Left colon (tissue), 2 donors: ENCODE measurements at regions of chr13 and their contacts with region 1.

Region 1: GRCh38 chr13:29707876-29708543 is 112.5 kb upstream of the SLC7A1 start:
- DNase-seq: peak; percentile 30 to 36
- ATAC-seq: peak; percentile 91

Region 2: DNA sequence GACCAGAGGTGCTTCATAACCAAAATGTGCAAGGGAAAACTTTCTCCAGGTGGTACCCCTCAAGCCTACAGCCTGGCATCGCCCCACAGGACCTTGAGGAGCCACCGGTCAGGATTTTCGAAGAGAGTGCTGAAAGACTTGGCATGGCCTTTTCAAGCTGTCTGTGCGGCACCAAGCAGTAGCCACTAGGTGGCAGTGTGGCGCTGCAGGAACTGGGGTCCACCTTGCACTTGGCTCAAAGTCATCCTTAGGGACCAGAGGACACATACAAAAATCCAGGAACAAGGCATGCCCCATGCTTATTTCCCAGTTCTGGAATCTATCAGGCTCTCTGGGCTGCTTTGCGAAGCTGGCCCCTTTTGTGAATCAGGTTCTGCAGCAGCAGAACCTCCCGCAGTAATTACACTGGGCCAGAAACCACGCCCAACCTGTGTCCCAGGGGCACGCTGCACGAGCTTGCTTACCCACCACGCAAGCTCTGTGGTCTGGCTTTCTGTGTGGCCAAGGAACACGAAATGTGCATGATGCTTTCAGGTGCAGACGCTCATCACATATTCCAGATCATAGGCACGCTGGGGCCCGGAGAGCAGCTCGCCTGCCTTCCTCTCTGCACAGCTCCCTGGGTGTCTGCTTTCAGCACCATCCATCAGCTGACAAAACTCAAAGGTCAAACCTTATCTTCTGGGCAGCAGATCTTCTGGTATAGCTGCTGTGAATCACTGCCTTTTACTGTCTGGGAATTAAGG is 199.7 kb before region 1 on chr13:
- intact Hi-C with region 1: loop called in 1 of 2 experiments (anchors 10 kb)
- DNase-seq: peak; percentile 68 to 87
- ATAC-seq: peak; percentile 90